ENCODE measurements at regions of chr21 and their contacts with region 1.

Region 1: GRCh38 chr21:42233067-42233961 is 14.4 kb downstream of the ABCG1 start:
- DNase-seq: peak; percentile 24
- ATAC-seq: no peak; the same call in 1 of the 2 replicates
- H3K4me3 Mint-ChIP-seq: no peak overlapping the region
- H3K27ac Mint-ChIP-seq: 0 out of 2 replicates have a peak overlapping the region, but pooled peaks have one; percentile 45
- H3K4me1 Mint-ChIP-seq: peaks cover 36% of the 10 kb centered on the region
- H3K27me3 Mint-ChIP-seq: peaks cover 35% of the 10 kb centered on the region
- CTCF ChIP-seq: no peak

Region 2: GRCh38 chr21:42220138-42220701 is 13.1 kb before region 1 on chr21:
- CTCF ChIA-PET with region 1: interaction called, 24 read pairs
- POLR2A ChIA-PET with region 1: interaction called, 20 read pairs
- DNase-seq: no peak
- ATAC-seq: peak; percentile 18
- H3K4me3 Mint-ChIP-seq: peak overlapping the region; percentile 87
- H3K27ac Mint-ChIP-seq: no peak overlapping the region
- H3K4me1 Mint-ChIP-seq: peaks cover 7% of the 10 kb centered on the region
- H3K27me3 Mint-ChIP-seq: peaks cover 57% of the 10 kb centered on the region
- CTCF ChIP-seq: no peak

Region 3: GRCh38 chr21:42245331-42246193 is 12.2 kb after region 1 on chr21:
- CTCF ChIA-PET with region 1: interaction called, 15 read pairs
- POLR2A ChIA-PET with region 1: interaction called, 3 read pairs
- DNase-seq: peak; percentile 42
- ATAC-seq: 0 out of 2 replicates have a peak, but pooled peaks have one; percentile 30
- H3K4me3 Mint-ChIP-seq: no peak overlapping the region
- H3K27ac Mint-ChIP-seq: no peak overlapping the region
- H3K4me1 Mint-ChIP-seq: peaks cover 5% of the 10 kb centered on the region; the same call in 1 of the 2 replicates
- H3K27me3 Mint-ChIP-seq: no peaks in the 10 kb centered on the region; the same call in 1 of the 2 replicates
- CTCF ChIP-seq: no peak

Region 4: GRCh38 chr21:42352441-42353095 is 119.3 kb after region 1 on chr21:
- CTCF ChIA-PET with region 1: no interaction called
- POLR2A ChIA-PET with region 1: no interaction called
- DNase-seq: no peak
- ATAC-seq: no peak
- H3K4me3 Mint-ChIP-seq: no peak overlapping the region
- H3K27ac Mint-ChIP-seq: no peak overlapping the region
- H3K4me1 Mint-ChIP-seq: no peaks in the 10 kb centered on the region
- H3K27me3 Mint-ChIP-seq: no peaks in the 10 kb centered on the region; the same call in 1 of the 2 replicates
- CTCF ChIP-seq: no peak

Measured in WTC11 (cell line).